GM12878 (cell line): ENCODE measurements at regions of chr15 and their contacts with region 1.

Region 1: GRCh38 chr15:85689729-85690128 is 105.0 kb downstream of the KLHL25 start:
- DNase-seq: peak; percentile 84
- ATAC-seq: peak; percentile 55
- H3K4me3 ChIP-seq: peak overlapping the region; percentile 62
- H3K27ac ChIP-seq: peak overlapping the region; percentile 97
- H3K4me1 ChIP-seq: peaks cover 67% of the 10 kb centered on the region
- H3K27me3 ChIP-seq: no peaks in the 10 kb centered on the region
- CTCF ChIP-seq: no peak
- EP300 ChIP-seq: no peak; a peak in 1 of 4 replicates
- POLR2A ChIP-seq: peak; percentile 87
- RAD21 ChIP-seq: no peak

Region 2: DNA sequence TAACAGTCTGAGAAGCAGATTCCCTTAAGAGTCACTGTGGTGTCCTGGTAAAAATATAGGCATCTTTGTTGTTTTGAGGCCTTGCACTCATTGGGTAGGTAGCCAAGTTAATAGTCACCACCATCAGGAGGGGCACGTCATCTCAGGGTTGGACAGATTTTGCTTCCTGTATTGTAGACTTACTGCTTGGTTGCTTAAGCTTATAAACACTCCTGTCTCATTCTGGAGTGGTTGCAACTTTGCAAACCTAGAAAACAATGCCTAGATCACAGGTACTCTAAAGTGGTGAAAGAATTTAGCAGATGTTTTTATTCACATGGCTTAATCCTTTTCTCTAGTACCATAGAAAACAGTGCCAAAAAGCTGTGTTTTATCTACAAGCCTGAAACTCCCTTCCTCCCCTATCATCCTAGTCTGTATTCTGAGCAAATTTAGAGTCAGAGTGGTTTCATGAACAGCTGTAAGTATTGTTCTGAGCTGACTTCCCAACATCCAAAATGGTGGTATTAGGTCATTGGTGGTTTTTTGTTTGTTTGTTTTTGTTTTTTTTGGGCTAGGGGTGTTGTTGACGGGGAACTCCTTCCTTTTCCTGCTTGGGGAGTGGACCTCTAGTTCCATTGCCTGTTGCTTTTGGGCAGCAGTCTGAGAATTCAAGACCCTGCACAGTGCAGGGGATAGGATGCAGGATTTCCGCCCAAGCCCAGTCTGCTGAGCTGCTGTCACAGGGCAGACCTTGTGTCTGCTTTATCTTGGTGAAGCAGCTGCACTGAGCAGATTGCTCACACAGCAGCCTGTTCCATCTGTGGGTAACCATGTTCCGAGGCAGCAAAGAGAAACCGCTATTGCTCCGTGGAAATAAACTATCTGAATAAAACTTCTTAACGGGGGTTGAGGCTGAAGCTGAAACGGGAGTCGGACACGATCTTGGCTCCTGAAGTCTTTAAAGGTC is 107.3 kb before region 1 on chr15:
- CTCF ChIA-PET with region 1: interaction called, 3 read pairs
- POLR2A ChIA-PET with region 1: interaction called, 5 read pairs
- RAD21 ChIA-PET with region 1: interaction called, 4 read pairs
- SMC1A ChIA-PET with region 1: interaction called, 8 read pairs
- in situ Hi-C with region 1: no loop called
- intact Hi-C with region 1: loop called (anchors 5 kb)
- DNase-seq: peak; percentile 34
- ATAC-seq: peak; percentile 51
- H3K4me3 ChIP-seq: peak overlapping the region; percentile 63
- H3K27ac ChIP-seq: peak overlapping the region; percentile 82
- H3K4me1 ChIP-seq: peaks cover 63% of the 10 kb centered on the region
- H3K27me3 ChIP-seq: no peaks in the 10 kb centered on the region
- CTCF ChIP-seq: no peak
- EP300 ChIP-seq: no peak
- POLR2A ChIP-seq: peak; percentile 81
- RAD21 ChIP-seq: no peak

Region 3: DNA sequence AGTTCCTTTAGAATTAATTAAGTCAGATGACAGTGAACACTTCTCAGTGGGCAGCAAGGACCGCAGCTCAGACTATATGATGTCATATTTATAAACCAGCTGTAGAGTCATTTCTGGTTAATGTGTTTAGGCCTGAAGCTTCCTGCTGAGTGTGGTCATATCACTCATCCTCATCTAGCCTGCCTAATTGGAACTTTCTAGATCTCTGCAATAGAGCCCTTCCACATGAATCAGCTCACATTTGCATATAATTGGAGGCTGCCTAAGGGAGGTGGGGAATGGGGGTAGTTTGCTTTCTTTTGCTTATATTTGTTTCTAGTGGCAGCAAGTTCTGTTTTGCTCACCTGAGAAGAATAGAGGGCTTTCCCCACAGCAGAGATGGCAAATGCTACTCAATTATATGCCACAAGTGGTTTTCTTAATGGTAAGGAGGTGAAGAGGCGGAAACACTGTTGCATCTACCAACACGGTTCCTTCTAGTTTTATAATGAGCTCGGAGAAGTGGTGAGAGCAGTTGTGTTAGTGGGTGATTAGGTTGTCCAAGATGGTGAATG is 43.1 kb before region 1 on chr15:
- CTCF ChIA-PET with region 1: interaction called, 3 read pairs
- POLR2A ChIA-PET with region 1: interaction called, 7 read pairs
- RAD21 ChIA-PET with region 1: interaction called, 13 read pairs
- SMC1A ChIA-PET with region 1: interaction called, 6 read pairs
- in situ Hi-C with region 1: no loop called
- intact Hi-C with region 1: loop called (anchors 5 kb)
- DNase-seq: no peak
- ATAC-seq: peak; percentile 93
- H3K4me3 ChIP-seq: no peak overlapping the region
- H3K27ac ChIP-seq: peak overlapping the region; percentile 21
- H3K4me1 ChIP-seq: peaks cover 8% of the 10 kb centered on the region
- H3K27me3 ChIP-seq: no peaks in the 10 kb centered on the region
- CTCF ChIP-seq: no peak
- EP300 ChIP-seq: peak; percentile 25 to 39; a peak in 1 of 4 replicates
- POLR2A ChIP-seq: no peak
- RAD21 ChIP-seq: no peak

Region 4: GRCh38 chr15:85707519-85708338 is 18.0 kb after region 1 on chr15:
- CTCF ChIA-PET with region 1: interaction called, 93 read pairs
- POLR2A ChIA-PET with region 1: interaction called, 217 read pairs
- RAD21 ChIA-PET with region 1: interaction called, 173 read pairs
- SMC1A ChIA-PET with region 1: interaction called, 311 read pairs
- in situ Hi-C with region 1: no loop called
- intact Hi-C with region 1: loop called (anchors 1 kb)
- DNase-seq: no peak
- ATAC-seq: peak; percentile 5
- H3K4me3 ChIP-seq: peak overlapping the region; percentile 60
- H3K27ac ChIP-seq: peak overlapping the region; percentile 99
- H3K4me1 ChIP-seq: peaks cover 66% of the 10 kb centered on the region
- H3K27me3 ChIP-seq: no peaks in the 10 kb centered on the region
- CTCF ChIP-seq: no peak
- EP300 ChIP-seq: no peak
- POLR2A ChIP-seq: no peak
- RAD21 ChIP-seq: no peak

Region 5: DNA sequence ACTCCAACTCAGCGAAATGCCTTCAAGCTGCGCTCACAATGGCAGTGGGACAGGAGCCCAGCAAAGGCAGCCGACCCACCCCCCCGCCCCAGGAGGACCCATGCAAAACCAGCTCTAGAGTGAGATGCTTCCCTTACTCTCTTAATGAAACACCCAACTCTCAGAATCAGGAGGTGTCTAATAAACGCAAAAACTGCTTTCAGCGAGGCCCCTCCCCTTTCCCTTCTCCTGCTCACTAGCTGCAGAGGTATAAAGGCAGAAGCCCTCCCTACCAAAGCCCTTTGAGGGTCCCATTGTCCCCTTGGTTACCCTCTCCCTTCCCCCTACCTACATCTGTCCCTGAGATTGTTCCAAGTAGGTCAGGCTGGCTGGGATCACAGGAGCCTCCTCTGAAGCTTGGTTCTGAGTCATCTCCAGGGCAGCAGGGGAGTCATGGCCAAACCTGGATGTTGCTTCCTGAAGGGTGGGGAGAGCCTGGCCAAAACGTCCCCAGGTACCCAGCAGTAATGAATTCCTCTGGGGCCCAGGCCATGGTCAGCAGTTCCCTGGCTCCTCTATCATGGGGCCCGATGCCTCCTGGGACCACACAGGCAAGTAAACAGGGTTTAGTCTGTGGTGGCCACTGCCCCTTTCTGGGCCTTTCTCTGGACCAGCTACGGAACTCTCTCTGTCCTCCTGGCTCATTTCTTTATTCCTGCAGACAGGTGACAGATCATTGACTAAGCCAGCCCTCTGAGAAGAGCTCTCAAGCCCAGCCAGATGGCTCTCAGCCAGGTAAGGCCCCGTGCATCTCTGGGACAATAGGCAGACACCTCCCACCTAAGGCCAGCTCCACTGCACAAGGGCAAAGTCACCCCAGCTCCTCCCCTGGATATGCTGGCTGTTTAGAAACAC is 96.4 kb after region 1 on chr15:
- CTCF ChIA-PET with region 1: no interaction called
- POLR2A ChIA-PET with region 1: no interaction called
- RAD21 ChIA-PET with region 1: no interaction called
- SMC1A ChIA-PET with region 1: no interaction called
- in situ Hi-C with region 1: no loop called
- intact Hi-C with region 1: no loop called
- DNase-seq: no peak
- ATAC-seq: peak; percentile 9; the same call in 2 of the 3 replicates
- H3K4me3 ChIP-seq: no peak overlapping the region
- H3K27ac ChIP-seq: peak overlapping the region; percentile 49; the same call in 1 of the 2 replicates
- H3K4me1 ChIP-seq: peaks cover 15% of the 10 kb centered on the region
- H3K27me3 ChIP-seq: no peaks in the 10 kb centered on the region
- CTCF ChIP-seq: no peak
- EP300 ChIP-seq: no peak
- POLR2A ChIP-seq: no peak
- RAD21 ChIP-seq: no peak